Ovary (tissue), 10 donors: ENCODE measurements at regions of chr10 and their contacts with region 1.

Region 1: GRCh38 chr10:21265621-21266020 is 259.9 kb downstream of the SKIDA1 start:
- DNase-seq: no peak
- H3K4me3 ChIP-seq: no peak overlapping the region
- H3K27ac ChIP-seq: no peak overlapping the region
- H3K4me1 ChIP-seq: no peaks in the 10 kb centered on the region
- H3K27me3 ChIP-seq: no peaks in the 10 kb centered on the region
- CTCF ChIP-seq: no peak
- EP300 ChIP-seq: no peak
- POLR2A ChIP-seq: no peak

Region 2: GRCh38 chr10:20863008-20863407 is 402.6 kb before region 1 on chr10:
- intact Hi-C with region 1: loop called in 1 of 4 experiments (anchors 5 kb)
- DNase-seq: no peak
- H3K4me3 ChIP-seq: no peak overlapping the region
- H3K27ac ChIP-seq: no peak overlapping the region
- H3K4me1 ChIP-seq: no peaks in the 10 kb centered on the region
- H3K27me3 ChIP-seq: no peaks in the 10 kb centered on the region
- CTCF ChIP-seq: no peak
- EP300 ChIP-seq: no peak
- POLR2A ChIP-seq: no peak

Region 3: GRCh38 chr10:21039721-21040120 is 225.9 kb before region 1 on chr10:
- intact Hi-C with region 1: no loop called
- DNase-seq: no peak
- H3K4me3 ChIP-seq: no peak overlapping the region
- H3K27ac ChIP-seq: no peak overlapping the region
- H3K4me1 ChIP-seq: no peaks in the 10 kb centered on the region
- H3K27me3 ChIP-seq: no peaks in the 10 kb centered on the region
- CTCF ChIP-seq: no peak
- EP300 ChIP-seq: no peak
- POLR2A ChIP-seq: no peak

Region 4: GRCh38 chr10:21078410-21079329 is 187.0 kb before region 1 on chr10:
- intact Hi-C with region 1: loop called in 3 of 4 experiments (anchors 5 kb)
- DNase-seq: peak; percentile 49 to 73 (median 65)
- H3K4me3 ChIP-seq: no peak overlapping the region
- H3K27ac ChIP-seq: no peak overlapping the region
- H3K4me1 ChIP-seq: no peaks in the 10 kb centered on the region
- H3K27me3 ChIP-seq: no peaks in the 10 kb centered on the region
- CTCF ChIP-seq: peak; percentile 35 to 61 (median 45)
- EP300 ChIP-seq: no peak
- POLR2A ChIP-seq: no peak

Region 5: DNA sequence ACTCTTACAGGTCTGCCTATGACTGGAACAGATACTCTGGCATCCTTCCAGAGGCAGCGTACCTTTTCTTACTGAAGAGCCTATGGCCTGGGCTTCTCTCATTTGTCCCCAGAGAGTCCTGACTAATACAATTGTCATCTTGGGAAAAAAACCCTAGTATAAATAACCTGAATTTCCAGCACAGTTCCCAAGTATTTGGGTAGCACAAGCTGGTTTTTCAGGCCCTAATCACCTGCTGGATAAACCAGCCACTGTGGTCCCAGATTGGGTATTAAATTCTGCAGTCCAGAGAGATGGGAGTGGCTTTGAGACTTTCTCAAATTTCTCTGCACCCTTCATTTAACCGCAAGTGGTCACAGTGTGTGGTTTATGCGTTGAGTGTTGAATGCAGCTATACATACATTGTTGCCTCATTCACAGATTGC is 181.7 kb before region 1 on chr10:
- intact Hi-C with region 1: loop called in 3 of 4 experiments (anchors 5 kb)
- DNase-seq: no peak
- H3K4me3 ChIP-seq: no peak overlapping the region
- H3K27ac ChIP-seq: no peak overlapping the region
- H3K4me1 ChIP-seq: no peaks in the 10 kb centered on the region
- H3K27me3 ChIP-seq: no peaks in the 10 kb centered on the region
- CTCF ChIP-seq: no peak
- EP300 ChIP-seq: no peak
- POLR2A ChIP-seq: no peak